ENCODE measurements at regions of chr2 and their contacts with region 1.

Region 1: GRCh38 chr2:195318440-195319111 is 338.4 kb upstream of the SLC39A10 start:
- DNase-seq: peak; percentile 20
- H3K4me3 Mint-ChIP-seq: no peak overlapping the region
- H3K27ac Mint-ChIP-seq: no peak overlapping the region
- H3K4me1 Mint-ChIP-seq: peaks cover 23% of the 10 kb centered on the region
- H3K27me3 Mint-ChIP-seq: no peaks in the 10 kb centered on the region

Region 2: GRCh38 chr2:194166818-194167217 is 1151.8 kb before region 1 on chr2:
- intact Hi-C with region 1: loop called (anchors 1 kb)
- DNase-seq: no peak
- H3K4me3 Mint-ChIP-seq: no peak overlapping the region
- H3K27ac Mint-ChIP-seq: no peak overlapping the region
- H3K4me1 Mint-ChIP-seq: no peaks in the 10 kb centered on the region
- H3K27me3 Mint-ChIP-seq: no peaks in the 10 kb centered on the region

Region 3: GRCh38 chr2:194319222-194319992 is 999.2 kb before region 1 on chr2:
- intact Hi-C with region 1: loop called (anchors 5 kb)
- DNase-seq: no peak
- H3K4me3 Mint-ChIP-seq: no peak overlapping the region
- H3K27ac Mint-ChIP-seq: no peak overlapping the region
- H3K4me1 Mint-ChIP-seq: no peaks in the 10 kb centered on the region
- H3K27me3 Mint-ChIP-seq: no peaks in the 10 kb centered on the region

Region 4: GRCh38 chr2:194464964-194465638 is 853.5 kb before region 1 on chr2:
- intact Hi-C with region 1: loop called (anchors 10 kb)
- DNase-seq: no peak
- H3K4me3 Mint-ChIP-seq: no peak overlapping the region
- H3K27ac Mint-ChIP-seq: no peak overlapping the region
- H3K4me1 Mint-ChIP-seq: no peaks in the 10 kb centered on the region
- H3K27me3 Mint-ChIP-seq: no peaks in the 10 kb centered on the region

Region 5: GRCh38 chr2:194545978-194546377 is 772.6 kb before region 1 on chr2:
- intact Hi-C with region 1: loop called (anchors 2 kb)
- DNase-seq: no peak
- H3K4me3 Mint-ChIP-seq: no peak overlapping the region
- H3K27ac Mint-ChIP-seq: no peak overlapping the region
- H3K4me1 Mint-ChIP-seq: no peaks in the 10 kb centered on the region
- H3K27me3 Mint-ChIP-seq: no peaks in the 10 kb centered on the region

Region 6: GRCh38 chr2:195252018-195252417 is 66.6 kb before region 1 on chr2:
- intact Hi-C with region 1: no loop called
- DNase-seq: no peak
- H3K4me3 Mint-ChIP-seq: no peak overlapping the region
- H3K27ac Mint-ChIP-seq: no peak overlapping the region
- H3K4me1 Mint-ChIP-seq: no peaks in the 10 kb centered on the region
- H3K27me3 Mint-ChIP-seq: no peaks in the 10 kb centered on the region

Region 7: GRCh38 chr2:195486987-195487644 is 168.5 kb after region 1 on chr2:
- intact Hi-C with region 1: loop called (anchors 5 kb)
- DNase-seq: peak; percentile 26
- H3K4me3 Mint-ChIP-seq: peak overlapping the region; percentile 32
- H3K27ac Mint-ChIP-seq: peak overlapping the region; percentile 61
- H3K4me1 Mint-ChIP-seq: peaks cover 56% of the 10 kb centered on the region
- H3K27me3 Mint-ChIP-seq: no peaks in the 10 kb centered on the region

Region 8: DNA sequence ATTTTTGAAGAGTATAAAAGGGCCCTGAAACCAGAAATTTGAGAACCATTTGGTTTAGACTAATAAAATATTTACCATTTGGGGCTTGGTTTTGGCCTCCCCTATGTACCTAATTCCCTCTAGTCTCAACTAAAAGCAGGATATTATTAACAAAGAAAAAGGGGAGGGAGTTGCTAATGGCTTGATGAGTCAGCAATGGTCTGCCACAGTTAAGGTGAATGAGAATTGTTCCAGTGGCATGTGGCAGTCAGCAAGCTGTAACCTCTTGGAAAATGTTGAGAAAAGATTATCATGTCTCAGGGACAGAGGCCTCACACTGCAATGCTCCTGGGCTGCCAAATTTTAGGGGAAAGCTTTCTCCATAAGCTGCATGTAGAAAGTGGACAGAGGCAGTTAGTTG is 318.3 kb after region 1 on chr2:
- intact Hi-C with region 1: no loop called
- DNase-seq: no peak
- H3K4me3 Mint-ChIP-seq: no peak overlapping the region
- H3K27ac Mint-ChIP-seq: no peak overlapping the region
- H3K4me1 Mint-ChIP-seq: no peaks in the 10 kb centered on the region
- H3K27me3 Mint-ChIP-seq: no peaks in the 10 kb centered on the region

Measured in activated T-helper 1 cell treated with anti-CD3 and anti-CD28 coated beads, Interleukin-12 subunit alpha, Interleukin-12 subunit beta, Interleukin-2, Interleukin-4 antibody, amounts not matched to agents 30 ng/mL and 10 ng/mL and 1 ng/mL, durations not matched to agents 14 hours and 24 hours and 36 hours (primary cell).